OCI-LY7 (cell line): ENCODE measurements at regions of chr7 and their contacts with region 1.

Region 1: GRCh38 chr7:5831196-5831595 is 49.4 kb upstream of the OCM start:
- DNase-seq: no peak
- H3K4me3 ChIP-seq: no peak overlapping the region
- H3K27ac ChIP-seq: no peak overlapping the region
- H3K4me1 ChIP-seq: no peaks in the 10 kb centered on the region
- CTCF ChIP-seq: no peak

Region 2: DNA sequence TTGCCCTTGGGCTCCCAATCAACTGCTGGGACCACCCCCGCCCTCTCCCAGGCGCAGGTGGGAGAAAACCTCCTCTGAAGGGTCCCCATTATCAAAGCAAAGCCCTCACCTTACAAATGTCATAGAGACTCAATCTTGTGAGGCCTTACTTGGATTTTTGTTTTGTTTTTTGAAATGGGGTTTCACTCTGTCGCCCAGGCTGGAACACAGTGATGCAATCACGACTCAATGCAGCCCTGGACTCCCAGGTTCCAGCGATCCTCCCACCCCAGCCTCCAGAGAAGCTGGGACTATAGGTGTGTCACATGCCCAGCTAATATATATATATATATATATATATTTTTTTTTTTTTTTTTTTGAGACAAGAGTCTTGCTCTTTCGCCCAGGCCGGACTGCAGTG is 698.7 kb before region 1 on chr7:
- CTCF ChIA-PET with region 1: no interaction called
- POLR2A ChIA-PET with region 1: no interaction called
- intact Hi-C with region 1: loop called (anchors 5 kb)
- DNase-seq: no peak
- H3K4me3 ChIP-seq: no peak overlapping the region
- H3K27ac ChIP-seq: no peak overlapping the region
- H3K4me1 ChIP-seq: no peaks in the 10 kb centered on the region
- CTCF ChIP-seq: no peak

Region 3: GRCh38 chr7:6139189-6139996 is 308.2 kb after region 1 on chr7:
- CTCF ChIA-PET with region 1: no interaction called
- POLR2A ChIA-PET with region 1: no interaction called
- intact Hi-C with region 1: no loop called
- DNase-seq: no peak
- H3K4me3 ChIP-seq: no peak overlapping the region
- H3K27ac ChIP-seq: no peak overlapping the region
- H3K4me1 ChIP-seq: no peaks in the 10 kb centered on the region
- CTCF ChIP-seq: no peak